Activated naive CD4-positive, alpha-beta T cell treated with anti-CD3 and anti-CD28 coated beads for 36 hours (primary cell): ENCODE measurements at regions of chr4 and their contacts with region 1.

Region 1: DNA sequence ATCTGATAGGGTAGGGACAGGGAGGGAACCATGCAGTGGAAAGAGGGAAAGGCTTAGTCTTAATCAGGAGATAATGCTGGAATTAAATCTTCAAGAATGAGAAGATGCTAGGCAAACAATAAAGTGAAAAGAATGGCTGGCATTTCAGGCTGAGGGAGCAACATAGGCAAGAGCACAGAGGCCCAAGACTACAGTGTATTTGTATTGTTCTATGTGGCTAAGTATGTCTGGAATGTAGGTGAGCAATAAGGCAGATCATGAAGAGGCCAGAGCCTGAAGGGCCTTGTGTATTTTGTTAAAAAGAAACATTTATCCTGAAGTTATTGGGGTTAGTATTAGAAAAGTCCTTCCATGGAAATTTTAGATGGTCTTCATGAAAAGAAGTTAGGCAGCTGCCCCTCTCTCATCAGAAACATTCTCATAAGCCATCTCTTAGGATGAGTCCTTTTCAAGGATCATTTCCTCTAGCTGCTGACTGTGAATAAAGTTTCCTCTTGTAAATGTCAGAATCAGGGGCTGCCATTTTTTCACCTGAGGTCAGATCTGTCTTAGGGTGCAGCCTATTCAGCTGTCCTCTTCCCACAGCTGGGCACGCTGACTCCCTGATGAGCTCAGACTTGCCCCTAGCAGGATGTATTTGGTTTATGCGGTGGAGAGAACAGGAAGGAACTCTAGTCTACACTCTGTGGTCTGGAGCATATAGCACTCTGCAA is 46.3 kb downstream of the ATP10D start:
- DNase-seq: peak; percentile 66
- H3K4me3 Mint-ChIP-seq: no peak overlapping the region
- H3K27ac Mint-ChIP-seq: no peak overlapping the region
- H3K4me1 Mint-ChIP-seq: peaks cover 33% of the 10 kb centered on the region
- H3K27me3 Mint-ChIP-seq: no peaks in the 10 kb centered on the region

Region 2: DNA sequence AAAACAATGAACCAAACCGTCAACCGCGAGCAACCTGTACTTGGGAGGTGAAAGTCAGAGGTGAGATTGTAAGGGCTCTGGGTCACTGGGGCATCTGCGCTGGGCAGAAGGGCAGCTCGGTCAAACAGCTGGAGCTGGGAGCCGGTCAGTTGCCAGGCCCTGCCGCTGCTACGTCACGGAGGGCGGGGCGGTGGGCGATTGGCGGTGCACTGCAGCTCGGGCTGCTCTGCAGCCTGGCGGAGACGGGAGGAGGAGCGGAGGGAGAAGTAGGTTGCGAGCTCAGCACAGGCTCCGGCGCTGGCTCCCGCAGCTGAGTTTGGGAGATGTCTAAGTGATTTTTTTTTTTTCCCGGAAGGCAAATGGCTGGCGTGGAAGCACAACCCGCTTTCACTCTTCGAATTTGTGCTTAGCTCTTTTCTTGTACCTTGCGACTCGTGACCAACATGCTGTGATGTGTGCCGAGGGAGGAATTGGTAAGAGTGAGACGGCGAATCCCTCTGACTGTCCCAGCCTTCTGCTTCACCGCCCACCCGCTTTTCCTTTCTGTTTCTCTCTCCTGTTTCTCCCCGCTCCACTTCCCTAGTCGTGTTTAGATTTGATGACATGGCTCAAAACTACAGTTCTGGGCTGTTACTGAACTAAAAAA is 46.2 kb before region 1 on chr4 and contains the start of gene ATP10D:
- CTCF ChIA-PET with region 1: interaction called, 3 read pairs
- intact Hi-C with region 1: loop called (anchors 2 kb)
- DNase-seq: peak; percentile 82
- H3K4me3 Mint-ChIP-seq: peak within 1 kb of the TSS; percentile 93
- H3K27ac Mint-ChIP-seq: peak within 1 kb of the TSS; percentile 65
- H3K4me1 Mint-ChIP-seq: peaks cover 16% of the 10 kb centered on the region
- H3K27me3 Mint-ChIP-seq: no peaks in the 10 kb centered on the region
- total RNA-seq, gene ATP10D: 2.7 to 3.1 TPM

Region 3: GRCh38 chr4:47490550-47490949 is 40.8 kb before region 1 on chr4:
- CTCF ChIA-PET with region 1: interaction called, 3 read pairs
- intact Hi-C with region 1: loop called (anchors 2 kb)
- DNase-seq: peak; percentile 40
- H3K4me3 Mint-ChIP-seq: no peak overlapping the region
- H3K27ac Mint-ChIP-seq: no peak overlapping the region
- H3K4me1 Mint-ChIP-seq: peaks cover 24% of the 10 kb centered on the region
- H3K27me3 Mint-ChIP-seq: no peaks in the 10 kb centered on the region

Region 4: GRCh38 chr4:47543331-47543730 is 11.9 kb after region 1 on chr4:
- CTCF ChIA-PET with region 1: no interaction called
- intact Hi-C with region 1: no loop called
- DNase-seq: no peak
- H3K4me3 Mint-ChIP-seq: no peak overlapping the region
- H3K27ac Mint-ChIP-seq: no peak overlapping the region
- H3K4me1 Mint-ChIP-seq: no peaks in the 10 kb centered on the region
- H3K27me3 Mint-ChIP-seq: no peaks in the 10 kb centered on the region